Natural killer cell (primary cell): ENCODE measurements at regions of chr1 and their contacts with region 1.

Region 1: GRCh38 chr1:223081181-223081994 is 61.7 kb downstream of the TLR5 start:
- DNase-seq: peak; percentile 57 to 80
- ATAC-seq: peak; percentile 74 to 96 (median 94)
- H3K4me3 ChIP-seq: peak overlapping the region; percentile 21
- H3K4me3 Mint-ChIP-seq: peak overlapping the region; percentile 72
- H3K27ac ChIP-seq: no peak overlapping the region
- H3K27ac Mint-ChIP-seq: peak overlapping the region in 1 of 2 donors; percentile 73
- H3K4me1 ChIP-seq: peaks cover 5% of the 10 kb centered on the region
- H3K4me1 Mint-ChIP-seq: peaks cover 0 to 8% of the 10 kb centered on the region in 2 donors
- H3K27me3 ChIP-seq: no peaks in the 10 kb centered on the region
- H3K27me3 Mint-ChIP-seq: peaks cover 4 to 7% of the 10 kb centered on the region in 2 donors
- CTCF ChIP-seq: peak; percentile 80

Region 2: GRCh38 chr1:222028116-222028515 is 1053.3 kb before region 1 on chr1:
- intact Hi-C with region 1: no loop called
- DNase-seq: no peak
- ATAC-seq: no peak
- H3K4me3 ChIP-seq: no peak overlapping the region
- H3K4me3 Mint-ChIP-seq: no peak overlapping the region
- H3K27ac ChIP-seq: no peak overlapping the region
- H3K27ac Mint-ChIP-seq: no peak overlapping the region
- H3K4me1 ChIP-seq: no peaks in the 10 kb centered on the region
- H3K4me1 Mint-ChIP-seq: no peaks in the 10 kb centered on the region
- H3K27me3 ChIP-seq: no peaks in the 10 kb centered on the region
- H3K27me3 Mint-ChIP-seq: peaks cover 8 to 9% of the 10 kb centered on the region in 2 donors
- CTCF ChIP-seq: no peak

Region 3: GRCh38 chr1:222739465-222739864 is 341.9 kb before region 1 on chr1:
- intact Hi-C with region 1: loop called (anchors 2 kb)
- DNase-seq: no peak
- ATAC-seq: no peak
- H3K4me3 ChIP-seq: no peak overlapping the region
- H3K4me3 Mint-ChIP-seq: no peak overlapping the region
- H3K27ac ChIP-seq: peak overlapping the region; percentile 54
- H3K27ac Mint-ChIP-seq: no peak overlapping the region
- H3K4me1 ChIP-seq: no peaks in the 10 kb centered on the region
- H3K4me1 Mint-ChIP-seq: no peaks in the 10 kb centered on the region
- H3K27me3 ChIP-seq: no peaks in the 10 kb centered on the region
- H3K27me3 Mint-ChIP-seq: no peaks in the 10 kb centered on the region
- CTCF ChIP-seq: no peak

Region 4: DNA sequence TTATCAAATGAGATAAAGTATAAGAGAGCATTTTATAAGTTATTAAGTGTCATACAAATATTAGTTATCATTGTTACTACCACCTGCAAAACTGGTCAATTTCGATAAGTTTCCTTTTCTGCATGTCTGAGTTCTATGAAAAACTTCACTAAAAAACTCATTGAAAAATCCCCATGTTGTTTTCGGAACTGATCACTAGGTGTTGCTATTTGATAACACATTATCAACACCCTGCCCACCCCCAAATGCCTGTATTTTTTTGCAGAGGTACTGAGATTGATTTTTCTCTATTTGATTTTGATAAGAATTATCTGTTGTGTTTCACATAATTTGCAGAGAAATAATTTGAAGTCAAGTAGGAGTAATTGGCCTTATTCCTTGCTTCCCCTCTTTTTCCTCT is 288.6 kb before region 1 on chr1:
- intact Hi-C with region 1: loop called (anchors 1 kb)
- DNase-seq: peak in 1 of 2 donors; percentile 53
- ATAC-seq: peak in 1 of 3 donors; percentile 30
- H3K4me3 ChIP-seq: no peak overlapping the region
- H3K4me3 Mint-ChIP-seq: no peak overlapping the region
- H3K27ac ChIP-seq: no peak overlapping the region
- H3K27ac Mint-ChIP-seq: no peak overlapping the region
- H3K4me1 ChIP-seq: no peaks in the 10 kb centered on the region
- H3K4me1 Mint-ChIP-seq: no peaks in the 10 kb centered on the region
- H3K27me3 ChIP-seq: no peaks in the 10 kb centered on the region
- H3K27me3 Mint-ChIP-seq: no peaks in the 10 kb centered on the region
- CTCF ChIP-seq: peak; percentile 35

Region 5: DNA sequence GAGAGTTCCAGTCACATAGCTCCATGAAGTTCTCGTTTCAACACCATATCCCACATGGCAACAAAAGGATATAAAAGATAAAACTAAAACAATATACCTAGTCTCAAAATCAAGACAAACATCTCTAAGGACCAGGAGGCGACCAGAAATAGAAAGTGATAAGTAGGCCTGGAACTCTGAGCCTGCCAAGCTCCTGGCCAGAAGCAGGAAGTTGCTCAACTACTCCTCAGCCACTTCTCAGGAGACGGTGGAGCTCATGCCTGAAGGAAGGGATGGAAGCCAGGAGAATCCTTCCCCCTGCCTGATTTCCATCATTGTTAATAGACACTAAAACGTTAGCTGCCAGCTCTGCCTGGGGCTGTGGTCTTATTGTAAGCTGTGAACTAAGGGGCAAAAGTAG is 171.8 kb before region 1 on chr1:
- intact Hi-C with region 1: no loop called
- DNase-seq: no peak
- ATAC-seq: no peak
- H3K4me3 ChIP-seq: no peak overlapping the region
- H3K4me3 Mint-ChIP-seq: no peak overlapping the region
- H3K27ac ChIP-seq: no peak overlapping the region
- H3K27ac Mint-ChIP-seq: no peak overlapping the region
- H3K4me1 ChIP-seq: no peaks in the 10 kb centered on the region
- H3K4me1 Mint-ChIP-seq: no peaks in the 10 kb centered on the region
- H3K27me3 ChIP-seq: no peaks in the 10 kb centered on the region
- H3K27me3 Mint-ChIP-seq: no peaks in the 10 kb centered on the region
- CTCF ChIP-seq: no peak